ENCODE measurements at regions of chr12 and their contacts with region 1.

Region 1: DNA sequence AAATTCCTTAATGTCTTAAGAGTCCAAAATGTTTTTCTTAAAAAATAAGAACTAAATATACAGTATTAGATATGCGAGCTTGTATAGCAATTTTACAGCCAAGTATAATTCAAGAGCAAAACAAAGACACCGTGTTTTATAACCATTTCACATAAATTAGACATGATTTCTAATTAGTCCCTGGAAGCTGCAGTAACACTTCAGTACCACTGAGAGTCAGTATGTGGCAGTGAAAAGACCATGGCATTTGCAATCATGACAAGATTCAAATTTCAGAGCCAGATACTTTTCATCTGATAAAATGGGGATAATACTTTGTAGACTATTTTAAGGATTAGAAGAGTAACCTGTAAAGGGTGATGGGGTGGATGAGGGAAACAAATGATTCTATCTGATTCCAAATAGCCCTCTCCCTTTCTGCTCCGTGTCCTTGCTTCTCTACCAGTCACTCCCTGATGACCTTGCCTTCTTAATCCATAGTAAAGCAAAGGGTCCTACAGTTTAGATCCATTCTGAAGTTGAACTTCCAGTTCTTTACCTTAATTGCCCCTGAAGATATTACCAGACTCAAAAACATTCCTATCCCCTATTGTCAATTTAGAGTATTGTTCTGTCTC is 145.4 kb upstream of the ABCD2 start:
- DNase-seq: peak in 1 of 2 donors; percentile 64
- H3K4me3 ChIP-seq: no peak overlapping the region
- H3K27ac ChIP-seq: no peak overlapping the region
- H3K4me1 ChIP-seq: no peaks in the 10 kb centered on the region
- H3K27me3 ChIP-seq: no peaks in the 10 kb centered on the region
- CTCF ChIP-seq: peak in 5 of 7 experiments; percentile 26 to 74 (median 65)
- EP300 ChIP-seq: no peak
- POLR2A ChIP-seq: no peak

Region 2: GRCh38 chr12:39824505-39825212 is 59.6 kb after region 1 on chr12:
- intact Hi-C with region 1: no loop called
- DNase-seq: no peak
- H3K4me3 ChIP-seq: no peak overlapping the region
- H3K27ac ChIP-seq: no peak overlapping the region
- H3K4me1 ChIP-seq: no peaks in the 10 kb centered on the region
- H3K27me3 ChIP-seq: no peaks in the 10 kb centered on the region
- CTCF ChIP-seq: no peak
- EP300 ChIP-seq: no peak
- POLR2A ChIP-seq: no peak

Region 3: GRCh38 chr12:39990122-39991101 is 225.4 kb after region 1 on chr12:
- intact Hi-C with region 1: loop called (anchors 10 kb)
- DNase-seq: peak; percentile 71 to 80
- H3K4me3 ChIP-seq: no peak overlapping the region
- H3K27ac ChIP-seq: no peak overlapping the region
- H3K4me1 ChIP-seq: no peaks in the 10 kb centered on the region
- H3K27me3 ChIP-seq: no peaks in the 10 kb centered on the region
- CTCF ChIP-seq: peak in 5 of 7 experiments; percentile 66 to 93 (median 68)
- EP300 ChIP-seq: no peak
- POLR2A ChIP-seq: no peak